PC-3 (cell line): ENCODE measurements at regions of chr20 and their contacts with region 1.

Region 1: DNA sequence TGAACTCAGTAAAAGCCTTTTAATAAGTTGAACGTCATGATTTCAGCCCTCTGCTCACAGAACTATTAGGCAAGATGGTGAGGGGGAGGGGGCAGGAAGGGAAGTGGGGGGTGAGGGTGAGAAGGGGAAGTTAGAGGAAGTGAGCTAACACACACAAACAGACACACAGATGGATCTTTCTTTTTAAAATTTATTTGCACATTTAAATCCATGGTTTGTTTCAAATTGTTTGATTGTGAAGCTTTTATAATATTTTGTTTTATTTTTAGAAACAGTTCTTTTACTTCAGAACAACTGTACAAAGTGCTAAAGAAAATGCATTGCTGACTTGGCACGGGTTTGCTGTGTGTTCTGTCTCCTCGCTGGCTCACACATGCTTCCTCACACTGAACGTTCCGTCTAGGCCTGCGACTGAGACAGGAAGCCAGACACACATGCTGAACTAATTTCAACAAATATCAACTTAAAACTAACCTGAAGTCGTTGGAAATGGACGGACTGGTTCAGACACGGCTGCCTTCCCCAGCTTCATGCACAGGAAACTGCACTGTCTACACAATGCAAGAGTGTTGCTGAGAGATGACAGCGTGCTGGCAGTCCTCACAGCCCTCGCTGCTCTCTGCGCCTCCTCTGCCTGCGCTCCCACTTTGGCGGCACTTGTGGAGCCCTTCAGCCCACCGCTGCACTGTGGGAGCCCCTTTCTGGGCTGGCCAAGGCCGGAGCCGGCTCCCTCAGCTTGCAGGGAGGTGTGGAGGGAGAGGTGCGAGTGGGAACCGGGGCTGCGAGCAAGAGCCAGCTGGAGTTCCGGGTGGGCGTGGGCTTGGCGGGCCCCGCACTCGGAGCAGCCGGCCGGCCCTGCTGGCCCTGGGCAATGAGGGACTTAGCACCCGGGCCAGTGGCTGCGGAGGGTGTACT is 8.1 kb upstream of the ZBP1 start:
- DNase-seq: peak; percentile 51
- ATAC-seq: peak; percentile 50; the same call in 1 of the 2 replicates
- H3K4me3 ChIP-seq: no peak overlapping the region
- H3K27ac ChIP-seq: no peak overlapping the region
- H3K4me1 ChIP-seq: peaks cover 10% of the 10 kb centered on the region
- H3K27me3 ChIP-seq: no peaks in the 10 kb centered on the region
- CTCF ChIP-seq: no peak

Region 2: GRCh38 chr20:57638173-57638894 is 10.0 kb after region 1 on chr20:
- CTCF ChIA-PET with region 1: interaction called, 15 read pairs
- POLR2A ChIA-PET with region 1: no interaction called
- intact Hi-C with region 1: no loop called
- DNase-seq: peak; percentile 38
- ATAC-seq: peak; percentile 66
- H3K4me3 ChIP-seq: peak overlapping the region; percentile 58
- H3K27ac ChIP-seq: no peak overlapping the region
- H3K4me1 ChIP-seq: peaks cover 4% of the 10 kb centered on the region
- H3K27me3 ChIP-seq: no peaks in the 10 kb centered on the region
- CTCF ChIP-seq: no peak